Head of caudate nucleus (tissue), 42 donors: ENCODE measurements at regions of chr5 and their contacts with region 1.

Region 1: GRCh38 chr5:150656191-150657132 is 4.6 kb upstream of the MYOZ3 start:
- DNase-seq: peak in 41 of 42 donors; percentile 29 to 88 (median 76)

Region 2: DNA sequence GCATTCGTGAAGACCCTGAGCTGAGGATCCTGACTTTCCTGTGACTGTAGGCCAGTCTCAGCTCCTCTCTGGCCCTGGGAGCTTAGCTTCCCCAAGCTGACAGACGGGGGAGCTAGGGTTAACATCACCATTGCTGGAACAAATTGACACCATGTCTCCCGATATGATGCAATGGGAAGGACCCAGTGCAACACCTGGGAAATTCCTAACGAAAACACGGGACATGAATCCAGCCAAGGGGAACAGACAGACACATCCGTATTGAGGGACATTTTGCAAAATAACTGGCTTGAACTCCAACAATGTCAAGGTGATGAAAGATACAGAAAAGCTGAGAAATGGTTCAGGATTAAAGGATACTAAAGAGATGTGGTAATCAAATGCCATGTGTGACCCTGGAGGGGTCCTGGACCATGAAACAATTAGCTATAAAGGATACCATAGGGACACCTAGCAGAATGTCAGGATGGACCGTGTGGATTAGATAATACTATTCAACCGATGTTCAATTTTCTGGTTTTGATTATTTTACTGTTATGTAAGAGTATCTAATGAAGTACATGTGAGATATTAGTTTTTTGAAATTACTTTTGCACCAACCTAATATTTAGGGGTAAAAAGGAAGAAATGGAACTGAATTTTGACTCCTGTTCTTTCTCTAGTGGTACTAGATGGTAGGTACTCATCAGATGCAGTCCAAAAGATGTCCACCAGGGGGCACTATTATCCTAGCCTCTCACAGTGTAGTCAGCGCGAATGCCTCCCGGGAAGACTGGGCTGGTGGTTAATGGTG is 95.9 kb before region 1 on chr5:
- intact Hi-C with region 1: loop called (anchors 5 kb)
- DNase-seq: peak; percentile 43 to 98 (median 91)

Region 3: GRCh38 chr5:150694612-150695011 is 38.1 kb after region 1 on chr5:
- intact Hi-C with region 1: loop called (anchors 5 kb)
- DNase-seq: no peak

Region 4: DNA sequence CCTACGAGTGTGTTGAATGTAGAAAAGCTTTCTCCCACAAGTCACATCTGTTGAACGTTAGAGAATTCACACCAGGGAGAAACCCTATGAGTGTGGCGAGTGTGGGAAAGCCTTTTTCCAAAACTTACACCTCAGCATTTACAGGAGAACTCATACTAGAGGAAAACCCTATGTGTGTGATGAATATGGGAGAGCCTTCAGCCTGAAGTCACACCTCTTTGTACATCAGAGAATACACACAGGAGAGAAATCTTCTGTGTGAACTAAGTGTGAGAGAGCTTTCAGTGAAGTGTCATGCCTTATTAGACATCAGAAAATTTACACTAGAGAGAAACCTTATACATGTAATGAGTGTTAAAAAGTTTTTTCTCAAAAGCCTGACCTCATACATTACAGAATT is 322.1 kb after region 1 on chr5:
- intact Hi-C with region 1: no loop called
- DNase-seq: no peak